Transverse colon (tissue), 4 donors: ENCODE measurements at regions of chr1 and their contacts with region 1.

Region 1: DNA sequence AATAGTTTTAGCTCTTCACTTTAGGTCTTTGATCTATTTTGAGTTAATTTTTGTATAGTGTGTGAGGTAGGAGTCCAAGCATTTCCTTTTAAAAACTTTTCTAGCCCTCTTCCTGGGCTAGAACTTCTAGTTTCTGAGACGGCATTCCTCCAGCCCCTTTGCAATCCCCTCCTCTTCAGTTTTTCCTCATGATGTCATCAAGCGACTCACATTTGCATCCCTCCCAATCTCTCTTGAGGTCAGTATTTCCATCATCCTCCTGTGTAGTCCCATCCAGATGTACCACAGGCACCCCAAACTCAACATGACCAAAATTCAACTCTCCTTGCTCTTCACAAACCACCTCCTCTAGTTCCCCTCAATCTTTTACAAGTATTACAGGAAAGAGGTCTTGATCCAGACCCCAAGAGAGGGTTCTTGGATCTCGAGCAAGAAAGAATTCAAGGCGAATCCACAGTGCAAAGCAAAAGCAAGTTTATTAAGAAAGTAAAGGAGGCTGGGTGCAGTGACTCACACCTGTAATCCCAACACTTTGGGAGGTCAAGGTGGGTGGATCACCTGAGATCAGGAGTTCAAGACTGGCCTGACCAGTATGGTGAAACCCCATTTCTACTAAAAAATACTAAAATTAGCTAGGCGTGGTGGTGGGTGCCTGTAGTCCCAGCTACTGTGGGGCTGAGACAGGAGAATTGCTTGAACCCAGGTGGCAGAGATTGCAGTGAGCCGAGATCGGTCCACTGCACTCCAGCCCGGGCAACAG is 10.9 kb downstream of the HMGN2 start:
- DNase-seq: no peak
- H3K4me3 ChIP-seq: no peak overlapping the region
- H3K27ac ChIP-seq: no peak overlapping the region
- H3K4me1 ChIP-seq: no peaks in the 10 kb centered on the region
- H3K27me3 ChIP-seq: no peaks in the 10 kb centered on the region
- CTCF ChIP-seq: no peak
- EP300 ChIP-seq: no peak
- POLR2A ChIP-seq: no peak

Region 2: DNA sequence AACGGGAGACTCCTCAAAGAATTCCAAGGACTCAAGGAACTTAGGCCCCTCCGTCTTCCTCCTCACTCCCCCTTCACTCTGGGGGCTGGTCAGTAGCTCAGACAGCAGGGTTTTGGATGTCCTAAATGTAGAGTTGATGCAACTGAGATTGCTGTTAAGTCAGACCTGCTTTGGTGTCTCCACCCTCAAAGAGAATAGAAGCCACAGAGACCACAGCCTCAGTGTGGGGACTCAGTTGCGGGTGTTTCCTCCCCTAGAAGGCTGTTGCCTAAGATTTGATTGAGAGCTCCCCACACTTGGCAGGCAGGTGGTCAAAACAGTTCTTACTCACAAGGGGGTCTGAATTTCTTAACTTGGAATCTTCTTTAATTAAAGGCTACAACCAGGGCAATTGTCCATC is 858.9 kb before region 1 on chr1:
- in situ Hi-C with region 1: no loop called
- intact Hi-C with region 1: loop called (anchors 5 kb)
- DNase-seq: no peak
- H3K4me3 ChIP-seq: no peak overlapping the region
- H3K27ac ChIP-seq: no peak overlapping the region
- H3K4me1 ChIP-seq: peaks cover 1 to 18% (median 5%) of the 10 kb centered on the region in 4 donors
- H3K27me3 ChIP-seq: peaks cover 4% of the 10 kb centered on the region
- CTCF ChIP-seq: no peak
- EP300 ChIP-seq: no peak
- POLR2A ChIP-seq: no peak

Region 3: GRCh38 chr1:26417111-26417759 is 65.9 kb before region 1 on chr1:
- in situ Hi-C with region 1: no loop called
- intact Hi-C with region 1: no loop called
- DNase-seq: peak; percentile 83
- H3K4me3 ChIP-seq: no peak overlapping the region
- H3K27ac ChIP-seq: no peak overlapping the region
- H3K4me1 ChIP-seq: peaks cover 0 to 7% (median 2%) of the 10 kb centered on the region in 4 donors
- H3K27me3 ChIP-seq: peaks cover 41% of the 10 kb centered on the region
- CTCF ChIP-seq: peak; percentile 54 to 86 (median 80)
- EP300 ChIP-seq: no peak
- POLR2A ChIP-seq: no peak

Region 4: DNA sequence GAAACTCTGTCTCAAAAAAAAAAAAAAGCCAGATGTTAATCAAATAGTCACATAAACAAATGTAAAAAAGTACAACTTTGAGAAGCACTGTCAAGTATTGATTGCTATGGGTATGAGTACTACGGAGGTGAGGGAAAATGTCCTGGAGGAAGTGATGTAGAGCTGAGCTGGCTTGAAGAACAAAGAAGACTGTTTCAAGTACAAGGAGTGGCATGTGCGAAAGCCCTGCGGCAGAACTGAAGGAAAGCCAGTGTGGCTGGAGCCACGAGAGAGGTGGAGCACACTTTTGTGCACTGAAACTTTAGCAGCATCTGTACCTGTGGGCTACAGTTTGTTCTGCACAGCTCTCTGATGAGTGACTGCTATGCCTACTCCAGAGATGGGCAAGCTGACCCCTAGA is 41.1 kb after region 1 on chr1:
- in situ Hi-C with region 1: no loop called
- intact Hi-C with region 1: loop called (anchors 1 kb)
- DNase-seq: no peak
- H3K4me3 ChIP-seq: no peak overlapping the region
- H3K27ac ChIP-seq: no peak overlapping the region
- H3K4me1 ChIP-seq: peaks cover 3 to 6% (median 5%) of the 10 kb centered on the region in 4 donors
- H3K27me3 ChIP-seq: peaks cover 7% of the 10 kb centered on the region
- CTCF ChIP-seq: no peak
- EP300 ChIP-seq: no peak
- POLR2A ChIP-seq: no peak